Right ventricle myocardium inferior (tissue), 1 donor: ENCODE measurements at regions of chr4 and their contacts with region 1.

Region 1: DNA sequence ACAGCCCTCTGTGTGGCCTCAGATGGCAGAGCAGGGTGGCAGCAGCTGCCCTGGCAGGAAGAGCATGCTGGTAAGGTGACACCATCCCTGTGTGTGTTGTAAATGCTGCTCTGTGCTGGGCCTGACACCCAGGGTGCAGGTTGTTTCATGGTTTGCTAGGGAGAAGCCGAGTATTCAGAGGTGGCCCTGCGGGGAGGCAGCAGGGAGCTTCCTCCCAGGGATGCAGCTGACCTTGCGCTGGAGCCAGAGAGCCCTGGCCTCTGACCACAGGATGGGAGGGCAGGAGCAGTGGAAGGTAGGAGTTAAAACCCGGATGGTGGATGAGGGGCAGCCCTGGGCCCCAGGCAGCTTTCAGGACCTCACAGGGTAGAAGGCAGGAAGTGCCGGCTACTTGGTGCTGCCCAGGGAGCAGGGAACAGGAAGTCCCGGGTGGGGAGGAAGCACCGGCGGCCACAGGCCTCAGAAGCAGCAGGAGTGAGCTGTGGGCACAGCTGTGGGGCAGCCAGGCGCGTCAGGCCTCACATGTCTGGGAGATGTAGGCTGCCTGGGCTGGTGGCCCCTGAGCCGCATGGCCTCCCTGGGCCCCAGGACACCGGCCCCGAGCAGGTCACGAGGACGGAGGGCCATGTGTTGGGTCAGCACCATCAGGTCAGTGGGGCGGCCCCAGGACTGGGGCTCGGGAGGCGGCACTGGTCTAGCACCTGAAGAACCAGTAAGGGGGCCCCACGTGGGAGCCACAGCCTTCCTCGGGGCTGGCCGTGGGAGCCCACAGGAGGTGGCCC is 19.1 kb downstream of the SH3BP2 start:
- DNase-seq: peak; percentile 94
- ATAC-seq: peak; percentile 72

Region 2: GRCh38 chr4:2755837-2756694 is 56.0 kb before region 1 on chr4 and contains the start of gene TNIP2:
- intact Hi-C with region 1: no loop called
- DNase-seq: peak; percentile 94
- ATAC-seq: peak; percentile 89
- total RNA-seq, gene TNIP2: 29.6 TPM

Region 3: DNA sequence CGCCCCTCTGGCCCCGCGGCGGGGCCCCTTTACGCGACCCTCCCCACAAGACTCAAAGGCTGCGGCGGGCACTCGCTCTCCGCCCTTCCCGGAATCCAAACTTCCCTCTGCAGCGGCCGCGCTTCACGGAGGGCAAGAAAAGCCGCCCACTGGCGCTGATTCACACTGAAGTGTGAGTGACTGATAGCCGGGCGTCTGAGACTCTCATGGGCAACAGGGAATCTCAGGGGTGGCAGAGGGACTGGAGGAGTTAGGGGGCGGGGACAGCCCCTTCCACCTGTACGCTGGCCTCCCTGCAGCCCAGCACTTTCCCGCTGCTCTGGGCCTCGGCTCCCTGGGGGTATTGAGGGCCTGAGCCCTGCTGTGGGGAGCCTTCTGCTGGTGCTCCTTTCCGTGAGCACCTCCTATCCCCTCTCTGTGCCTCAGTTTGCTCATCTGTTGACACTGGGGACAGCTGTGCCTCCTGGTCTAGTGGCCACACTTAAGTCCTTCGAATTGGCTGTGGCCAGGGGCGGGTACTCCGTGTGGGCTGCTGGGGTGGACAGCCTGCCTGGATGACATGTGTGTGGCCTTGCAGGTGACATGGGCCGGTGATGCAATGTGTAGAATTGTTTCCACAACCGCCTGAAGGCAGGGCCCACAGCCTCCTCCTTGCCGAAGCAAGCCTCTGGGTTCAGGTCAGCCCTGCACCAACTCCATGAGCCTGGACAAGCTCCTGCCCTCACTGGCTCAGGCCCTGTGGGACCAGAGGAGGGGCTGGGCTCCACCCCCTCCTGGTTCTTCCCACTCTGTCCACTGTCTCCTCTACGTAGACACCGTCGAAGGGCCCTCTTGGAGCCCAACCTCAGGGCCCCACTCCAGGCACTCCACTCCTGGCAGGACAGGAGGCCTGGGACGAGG is 18.2 kb before region 1 on chr4:
- intact Hi-C with region 1: loop called (anchors 2 kb)
- DNase-seq: peak; percentile 83
- ATAC-seq: no peak